ENCODE measurements at regions of chr12 and their contacts with region 1.

Region 1: DNA sequence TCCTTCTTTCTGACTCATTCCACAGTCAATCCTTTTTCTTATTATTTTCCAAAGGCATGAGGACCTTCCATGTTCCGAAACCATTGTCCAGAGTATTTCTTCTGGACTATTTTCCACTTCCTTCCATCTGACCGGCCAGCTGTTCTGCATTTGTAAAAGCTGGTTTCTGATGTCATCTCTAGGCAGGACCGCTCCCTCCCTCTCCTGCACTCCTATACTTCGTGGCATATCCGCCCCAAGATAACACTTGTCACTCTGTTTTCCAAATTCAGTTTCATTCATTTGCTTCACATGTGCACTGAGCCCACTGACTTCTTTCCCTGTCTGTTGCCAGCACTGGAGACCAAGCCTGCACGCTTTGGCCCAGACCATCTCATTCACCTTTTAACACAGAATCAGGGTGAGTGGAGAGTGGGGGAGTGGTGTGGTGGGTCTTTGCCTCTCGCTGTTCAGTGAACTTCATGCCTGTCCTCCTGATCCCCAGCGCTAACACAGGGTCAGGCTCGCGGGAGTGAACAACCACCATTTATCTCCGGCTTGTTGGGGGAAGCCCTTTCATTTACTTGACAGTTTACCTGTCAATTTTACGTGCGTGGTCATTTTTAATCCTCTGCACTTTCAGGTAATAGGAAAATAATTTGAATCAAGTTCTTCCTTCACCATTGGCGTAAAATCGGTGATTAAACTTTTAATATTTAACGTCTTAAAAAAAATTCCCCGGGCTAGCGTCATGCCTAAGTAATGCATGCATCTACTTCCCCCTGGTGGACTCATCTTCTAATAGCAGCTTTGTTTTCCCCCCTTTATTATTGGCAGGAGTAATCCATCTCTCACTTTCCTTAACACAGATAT is 52.5 kb downstream of the C12orf75 start:
- DNase-seq: peak; percentile 4
- H3K4me3 Mint-ChIP-seq: no peak overlapping the region
- H3K27ac Mint-ChIP-seq: no peak overlapping the region
- H3K4me1 Mint-ChIP-seq: no peaks in the 10 kb centered on the region
- H3K27me3 Mint-ChIP-seq: no peaks in the 10 kb centered on the region

Region 2: DNA sequence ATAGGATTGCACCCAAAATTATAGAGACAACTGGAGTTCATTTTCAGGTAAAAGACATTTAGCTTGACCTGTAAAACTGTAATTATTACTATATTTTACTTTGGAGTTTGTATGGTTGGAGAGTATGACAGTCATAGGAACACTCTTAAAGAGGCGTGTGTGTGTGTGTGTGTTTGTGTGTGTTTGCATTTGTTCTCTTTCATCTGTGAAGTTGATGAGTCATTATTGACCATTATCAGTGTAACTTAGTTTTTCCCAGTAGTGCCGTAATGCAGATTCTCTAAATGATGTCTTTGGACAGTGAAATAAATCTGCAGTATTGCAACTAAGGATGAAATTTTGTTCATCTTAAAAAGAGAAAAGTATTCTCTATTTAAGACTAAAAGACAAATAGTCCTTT is 262.4 kb before region 1 on chr12:
- intact Hi-C with region 1: loop called (anchors 10 kb)
- DNase-seq: no peak
- H3K4me3 Mint-ChIP-seq: no peak overlapping the region
- H3K27ac Mint-ChIP-seq: no peak overlapping the region
- H3K4me1 Mint-ChIP-seq: no peaks in the 10 kb centered on the region
- H3K27me3 Mint-ChIP-seq: no peaks in the 10 kb centered on the region

Region 3: DNA sequence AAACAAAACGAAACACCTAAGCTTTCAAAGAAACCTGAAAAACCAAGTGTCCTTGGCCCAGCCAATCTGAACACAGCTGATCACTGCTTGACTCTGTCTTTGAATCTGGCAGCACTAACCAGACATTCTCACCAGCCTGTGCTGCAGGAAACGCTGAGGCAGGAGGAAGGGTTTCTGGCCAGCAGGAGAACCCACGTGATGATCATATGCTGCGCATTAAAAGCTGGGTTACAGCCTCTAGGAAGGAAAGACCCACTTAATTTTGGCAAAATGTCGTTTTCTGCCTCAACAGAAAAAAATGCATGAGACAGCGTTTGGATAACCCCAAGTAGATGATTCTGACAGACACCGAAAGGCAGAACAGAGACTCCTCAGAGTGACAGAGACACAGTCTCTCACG is 156.8 kb before region 1 on chr12:
- intact Hi-C with region 1: loop called (anchors 2 kb)
- DNase-seq: peak; percentile 24
- H3K4me3 Mint-ChIP-seq: peak overlapping the region; percentile 43
- H3K27ac Mint-ChIP-seq: no peak overlapping the region
- H3K4me1 Mint-ChIP-seq: peaks cover 71% of the 10 kb centered on the region
- H3K27me3 Mint-ChIP-seq: no peaks in the 10 kb centered on the region

Region 4: GRCh38 chr12:105279460-105280056 is 103.4 kb before region 1 on chr12:
- intact Hi-C with region 1: loop called (anchors 1 kb)
- DNase-seq: peak; percentile 21
- H3K4me3 Mint-ChIP-seq: no peak overlapping the region
- H3K27ac Mint-ChIP-seq: no peak overlapping the region
- H3K4me1 Mint-ChIP-seq: no peaks in the 10 kb centered on the region
- H3K27me3 Mint-ChIP-seq: peaks cover 15% of the 10 kb centered on the region

Measured in activated T-helper 1 cell treated with anti-CD3 and anti-CD28 coated beads, Interleukin-12 subunit alpha, Interleukin-12 subunit beta, Interleukin-2, Interleukin-4 antibody, amounts not matched to agents 30 ng/mL and 10 ng/mL and 1 ng/mL, durations not matched to agents 14 hours and 24 hours and 36 hours (primary cell).